ENCODE measurements at regions of chr1 and their contacts with region 1.

Region 1: DNA sequence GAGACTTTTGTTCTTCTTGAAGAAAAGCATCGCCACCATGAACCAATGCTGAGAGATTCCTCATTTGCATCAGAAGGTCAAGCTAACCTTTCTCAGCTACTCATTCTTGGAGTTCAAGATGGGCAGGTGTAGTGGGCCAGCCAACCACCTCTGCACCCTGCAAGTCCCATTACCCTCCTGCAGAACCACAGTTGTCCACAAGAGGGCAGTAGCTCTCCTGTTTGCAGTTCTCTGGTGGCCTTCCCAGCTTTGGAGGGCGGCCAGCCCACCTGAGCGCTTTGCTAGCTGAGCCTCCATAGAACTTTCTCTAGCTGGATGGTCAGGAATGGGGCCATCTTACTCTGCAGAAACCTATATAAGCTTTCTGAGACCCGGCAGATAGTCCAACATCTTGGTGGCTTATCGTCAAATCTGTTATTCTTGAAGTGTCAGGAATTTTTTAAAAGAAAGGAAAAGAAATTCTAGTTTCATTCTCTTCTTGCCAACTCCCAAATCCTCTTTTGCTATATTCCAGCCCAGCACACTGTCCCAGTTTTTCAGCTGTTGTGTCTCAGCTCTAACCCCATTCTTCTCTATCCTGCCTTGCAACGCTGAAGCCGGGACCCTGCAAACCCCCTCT is 11.0 kb upstream of the LMX1A start:
- DNase-seq: peak; percentile 69 to 81
- ATAC-seq: peak; percentile 47 to 79 (median 68)
- H3K4me3 ChIP-seq: no peak overlapping the region
- H3K27ac ChIP-seq: no peak overlapping the region
- H3K4me1 ChIP-seq: peaks cover 0 to 22% (median 8%) of the 10 kb centered on the region in 9 donors
- H3K27me3 ChIP-seq: peaks cover 0 to 65% (median 14%) of the 10 kb centered on the region in 7 donors
- CTCF ChIP-seq: peak; percentile 84 to 97 (median 95)

Region 2: DNA sequence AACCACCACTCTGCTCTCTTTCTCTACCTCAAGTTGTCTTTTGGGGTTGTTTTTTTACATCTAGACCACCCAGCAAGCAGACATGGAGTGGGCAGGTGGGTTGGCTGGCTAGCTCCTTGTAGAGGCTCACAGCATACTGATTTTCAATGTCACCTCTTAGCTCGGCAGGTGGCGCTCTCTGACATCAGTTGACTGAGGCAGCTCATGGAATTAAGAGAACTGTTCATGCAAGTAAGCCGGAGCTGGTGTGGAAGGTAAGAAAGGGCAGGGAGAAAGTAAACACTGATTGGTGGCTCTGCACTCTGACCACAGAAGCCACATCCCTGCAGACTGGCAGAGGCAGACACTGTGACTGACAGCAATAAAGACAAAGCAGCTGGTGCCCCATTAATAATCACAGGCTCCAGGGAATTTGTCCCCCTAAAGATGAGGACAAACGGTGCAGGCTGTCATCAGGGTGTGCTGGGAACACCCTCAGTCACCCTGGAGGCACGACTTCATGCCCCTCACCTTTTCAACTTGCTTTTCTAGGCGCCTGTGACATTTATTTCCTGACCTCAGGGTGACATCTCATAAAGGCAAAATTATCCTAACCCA is 237.8 kb before region 1 on chr1:
- intact Hi-C with region 1: loop called in 1 of 10 experiments (anchors 5 kb)
- DNase-seq: peak; percentile 25 to 35
- ATAC-seq: peak in 2 of 8 donors; percentile 61 to 70
- H3K4me3 ChIP-seq: no peak overlapping the region
- H3K27ac ChIP-seq: no peak overlapping the region
- H3K4me1 ChIP-seq: no peaks in the 10 kb centered on the region
- H3K27me3 ChIP-seq: peaks cover 0 to 71% (median 22%) of the 10 kb centered on the region in 7 donors
- CTCF ChIP-seq: peak in 8 of 9 donors; percentile 11 to 58 (median 49)

Region 3: DNA sequence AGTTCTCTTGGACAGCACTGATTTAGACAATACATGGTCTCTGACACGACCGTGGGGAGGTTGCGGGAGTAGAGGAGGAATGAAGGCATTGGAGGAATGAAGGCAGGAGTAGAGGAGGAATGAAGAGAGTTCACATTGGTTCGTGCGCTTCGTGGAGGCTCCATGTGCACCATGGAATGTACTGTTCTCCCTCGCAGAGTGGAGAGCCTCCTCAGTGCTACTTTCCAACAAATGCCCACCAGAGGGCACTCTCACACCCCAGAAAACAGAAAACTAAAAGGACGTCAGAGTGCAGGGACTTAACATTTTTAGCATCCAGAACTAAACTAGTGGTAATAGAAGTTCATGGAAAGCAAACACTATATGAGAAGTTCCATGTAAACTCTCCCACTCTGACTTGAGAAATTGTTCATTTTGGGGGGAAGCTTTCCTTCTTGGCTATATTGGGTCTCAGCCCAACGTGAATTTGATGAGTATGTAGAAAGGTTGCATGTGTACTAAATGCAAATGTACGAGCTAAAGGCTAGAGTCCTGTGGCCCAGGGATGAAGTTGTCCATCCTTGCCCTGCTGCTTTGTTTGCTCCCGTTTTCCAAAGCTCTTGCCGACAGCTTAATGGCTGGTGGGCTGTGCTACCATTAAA is 222.6 kb before region 1 on chr1:
- intact Hi-C with region 1: loop called (anchors 2 to 10 kb)
- DNase-seq: peak in 1 of 2 donors; percentile 36
- ATAC-seq: peak in 6 of 8 donors; percentile 42 to 86 (median 58)
- H3K4me3 ChIP-seq: no peak overlapping the region
- H3K27ac ChIP-seq: no peak overlapping the region
- H3K4me1 ChIP-seq: no peaks in the 10 kb centered on the region
- H3K27me3 ChIP-seq: peaks cover 0 to 75% (median 21%) of the 10 kb centered on the region in 7 donors
- CTCF ChIP-seq: peak; percentile 35 to 81 (median 74)

Region 4: GRCh38 chr1:165152727-165153126 is 214.8 kb before region 1 on chr1:
- intact Hi-C with region 1: loop called in 6 of 10 experiments (anchors 5 to 10 kb)
- DNase-seq: no peak
- ATAC-seq: peak in 2 of 8 donors; percentile 42 to 51
- H3K4me3 ChIP-seq: no peak overlapping the region
- H3K27ac ChIP-seq: no peak overlapping the region
- H3K4me1 ChIP-seq: no peaks in the 10 kb centered on the region
- H3K27me3 ChIP-seq: peaks cover 0 to 26% (median 3%) of the 10 kb centered on the region in 7 donors
- CTCF ChIP-seq: peak in 6 of 9 donors; percentile 26 to 39 (median 30)

Region 5: GRCh38 chr1:165257969-165258459 is 109.5 kb before region 1 on chr1:
- intact Hi-C with region 1: loop called in 3 of 10 experiments (anchors 5 kb)
- DNase-seq: peak; percentile 21 to 62
- ATAC-seq: peak; percentile 22 to 67 (median 54)
- H3K4me3 ChIP-seq: no peak overlapping the region
- H3K27ac ChIP-seq: no peak overlapping the region
- H3K4me1 ChIP-seq: peaks cover 0 to 7% (median 0%) of the 10 kb centered on the region in 9 donors
- H3K27me3 ChIP-seq: peaks cover 0 to 38% (median 10%) of the 10 kb centered on the region in 7 donors
- CTCF ChIP-seq: peak; percentile 48 to 73 (median 61)

Region 6: DNA sequence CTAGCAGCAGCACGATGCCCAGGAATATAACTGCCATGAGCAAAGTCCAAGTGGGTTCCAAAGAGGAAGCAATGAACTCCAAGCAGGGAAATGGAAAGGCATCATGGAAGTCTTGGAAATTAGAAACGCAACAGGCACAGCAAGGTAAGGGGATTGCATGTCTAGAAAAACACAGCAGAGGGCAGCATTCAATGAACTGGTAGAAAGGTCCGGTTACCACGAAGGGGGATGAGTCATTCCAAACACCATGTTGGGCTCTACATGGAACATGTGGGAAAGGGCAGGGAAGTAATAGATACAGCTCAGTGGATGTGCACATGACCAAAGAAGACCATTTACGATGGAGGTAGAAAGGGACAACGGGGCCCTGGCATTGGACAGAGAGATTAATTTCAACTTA is 41.0 kb after region 1 on chr1:
- intact Hi-C with region 1: no loop called
- DNase-seq: peak in 1 of 2 donors; percentile 34
- ATAC-seq: peak in 7 of 8 donors; percentile 39 to 68 (median 55)
- H3K4me3 ChIP-seq: no peak overlapping the region
- H3K27ac ChIP-seq: no peak overlapping the region
- H3K4me1 ChIP-seq: peaks cover 0 to 35% (median 13%) of the 10 kb centered on the region in 9 donors
- H3K27me3 ChIP-seq: peaks cover 0 to 29% (median 0%) of the 10 kb centered on the region in 7 donors
- CTCF ChIP-seq: peak in 7 of 9 donors; percentile 42 to 61 (median 55)

Region 7: GRCh38 chr1:165490175-165490574 is 122.7 kb after region 1 on chr1:
- intact Hi-C with region 1: no loop called
- DNase-seq: peak; percentile 56 to 82
- ATAC-seq: peak; percentile 85 to 96 (median 91)
- H3K4me3 ChIP-seq: no peak overlapping the region
- H3K27ac ChIP-seq: peak overlapping the region in 6 of 10 donors; percentile 33 to 70 (median 40)
- H3K4me1 ChIP-seq: peaks cover 0 to 58% (median 19%) of the 10 kb centered on the region in 9 donors
- H3K27me3 ChIP-seq: peaks cover 0 to 5% (median 0%) of the 10 kb centered on the region in 7 donors
- CTCF ChIP-seq: no peak

Measured in heart right ventricle (tissue), 16 donors.